ENCODE measurements at regions of chr6 and their contacts with region 1.

Region 1: DNA sequence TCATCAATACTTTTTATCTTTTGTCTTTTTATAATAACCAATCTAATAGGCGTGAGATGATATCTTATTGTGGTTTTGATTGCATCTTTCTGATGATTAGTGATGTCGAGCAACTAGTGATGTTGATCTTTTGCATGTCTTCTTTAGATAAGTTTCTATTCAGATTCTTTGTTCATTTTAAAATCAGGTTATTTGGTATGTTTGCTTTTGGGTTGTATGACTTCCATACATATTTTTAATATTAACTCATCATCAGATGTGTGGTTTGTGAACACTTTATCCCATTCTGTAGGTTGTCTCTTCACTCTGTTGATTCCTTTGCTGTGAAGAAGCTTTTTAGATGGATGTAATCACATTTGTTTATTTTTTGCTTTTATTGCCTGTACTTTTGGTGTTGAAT is 295.8 kb downstream of the BCKDHB start:
- DNase-seq: no peak
- H3K4me3 ChIP-seq: no peak overlapping the region
- H3K27ac ChIP-seq: no peak overlapping the region
- H3K4me1 ChIP-seq: no peaks in the 10 kb centered on the region
- H3K27me3 ChIP-seq: no peaks in the 10 kb centered on the region
- CTCF ChIP-seq: no peak

Region 2: DNA sequence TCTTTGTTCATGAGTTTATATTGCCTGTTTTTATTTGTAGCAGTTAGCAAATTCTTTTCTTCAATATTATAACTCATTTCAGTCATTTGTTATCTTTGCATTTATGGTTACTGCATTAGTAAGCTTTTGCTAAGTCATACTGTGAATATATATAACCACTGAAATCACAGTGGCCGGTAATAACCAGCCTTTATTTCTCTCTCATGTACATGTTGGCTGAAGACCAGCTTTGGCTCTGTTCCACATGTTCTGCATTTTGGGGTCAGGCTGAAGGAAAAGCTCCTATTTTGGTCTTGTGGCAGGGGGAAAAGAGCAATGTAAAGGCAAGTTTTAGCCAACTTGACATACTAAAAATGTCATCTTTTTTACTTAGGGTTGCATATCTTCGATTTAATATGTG is 19.5 kb before region 1 on chr6:
- CTCF ChIA-PET with region 1: no interaction called
- dilution Hi-C with region 1: no loop called
- in situ Hi-C with region 1: no loop called
- intact Hi-C with region 1: loop called (anchors 1 kb)
- DNase-seq: no peak
- H3K4me3 ChIP-seq: no peak overlapping the region
- H3K27ac ChIP-seq: no peak overlapping the region
- H3K4me1 ChIP-seq: no peaks in the 10 kb centered on the region
- H3K27me3 ChIP-seq: no peaks in the 10 kb centered on the region
- CTCF ChIP-seq: no peak